Endothelial cell of umbilical vein (primary cell): ENCODE measurements at regions of chr6 and their contacts with region 1.

Region 1: GRCh38 chr6:2818593-2818992 is 23.1 kb downstream of the SERPINB1 start:
- DNase-seq: peak; percentile 88
- H3K4me3 ChIP-seq: peak overlapping the region in 1 of 3 experiments; percentile 28
- H3K27ac ChIP-seq: peak overlapping the region; percentile 92
- H3K4me1 ChIP-seq: peaks cover 44% of the 10 kb centered on the region
- H3K27me3 ChIP-seq: no peaks in the 10 kb centered on the region
- CTCF ChIP-seq: no peak
- POLR2A ChIP-seq: no peak

Region 2: DNA sequence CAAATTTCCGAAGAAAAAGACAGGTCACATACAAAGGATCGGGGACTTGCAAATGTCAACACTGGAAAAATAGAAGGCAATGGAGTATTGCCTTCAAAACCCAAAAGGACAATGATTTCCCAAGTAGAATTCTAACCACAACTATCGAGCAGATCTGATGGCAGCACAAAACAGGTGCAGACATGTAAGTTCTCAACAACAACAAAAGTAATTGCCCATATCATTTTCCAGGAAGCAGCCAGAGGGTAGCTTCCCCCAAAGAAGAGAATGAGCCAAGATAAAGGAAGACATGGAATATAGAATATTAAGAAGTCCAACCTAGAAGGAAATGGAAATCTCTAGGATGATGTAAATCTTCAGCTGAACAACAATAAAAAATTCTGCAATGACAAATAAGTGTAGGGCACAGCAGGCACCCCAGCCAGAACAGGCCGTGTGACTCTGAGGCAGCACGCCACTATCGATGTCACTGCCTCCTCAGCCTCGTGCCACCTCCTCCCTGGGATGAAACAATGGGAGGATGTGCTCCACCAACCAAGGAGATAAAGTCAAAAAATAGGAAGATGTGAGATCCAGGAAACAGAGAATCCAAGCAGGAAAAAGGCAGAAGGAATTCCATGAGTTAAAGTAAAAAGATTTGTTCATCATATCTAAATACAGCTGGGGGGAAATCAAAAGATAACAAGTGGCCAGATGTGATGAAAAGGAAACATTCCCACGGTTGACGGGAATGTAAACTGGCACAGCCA is 11.1 kb before region 1 on chr6:
- CTCF ChIA-PET with region 1: interaction called, 11 read pairs
- POLR2A ChIA-PET with region 1: no interaction called
- dilution Hi-C with region 1: no loop called
- intact Hi-C with region 1: loop called (anchors 1 kb)
- DNase-seq: peak; percentile 80
- H3K4me3 ChIP-seq: no peak overlapping the region
- H3K27ac ChIP-seq: peak overlapping the region; percentile 7
- H3K4me1 ChIP-seq: peaks cover 30% of the 10 kb centered on the region
- H3K27me3 ChIP-seq: no peaks in the 10 kb centered on the region
- CTCF ChIP-seq: no peak
- POLR2A ChIP-seq: no peak

Region 3: DNA sequence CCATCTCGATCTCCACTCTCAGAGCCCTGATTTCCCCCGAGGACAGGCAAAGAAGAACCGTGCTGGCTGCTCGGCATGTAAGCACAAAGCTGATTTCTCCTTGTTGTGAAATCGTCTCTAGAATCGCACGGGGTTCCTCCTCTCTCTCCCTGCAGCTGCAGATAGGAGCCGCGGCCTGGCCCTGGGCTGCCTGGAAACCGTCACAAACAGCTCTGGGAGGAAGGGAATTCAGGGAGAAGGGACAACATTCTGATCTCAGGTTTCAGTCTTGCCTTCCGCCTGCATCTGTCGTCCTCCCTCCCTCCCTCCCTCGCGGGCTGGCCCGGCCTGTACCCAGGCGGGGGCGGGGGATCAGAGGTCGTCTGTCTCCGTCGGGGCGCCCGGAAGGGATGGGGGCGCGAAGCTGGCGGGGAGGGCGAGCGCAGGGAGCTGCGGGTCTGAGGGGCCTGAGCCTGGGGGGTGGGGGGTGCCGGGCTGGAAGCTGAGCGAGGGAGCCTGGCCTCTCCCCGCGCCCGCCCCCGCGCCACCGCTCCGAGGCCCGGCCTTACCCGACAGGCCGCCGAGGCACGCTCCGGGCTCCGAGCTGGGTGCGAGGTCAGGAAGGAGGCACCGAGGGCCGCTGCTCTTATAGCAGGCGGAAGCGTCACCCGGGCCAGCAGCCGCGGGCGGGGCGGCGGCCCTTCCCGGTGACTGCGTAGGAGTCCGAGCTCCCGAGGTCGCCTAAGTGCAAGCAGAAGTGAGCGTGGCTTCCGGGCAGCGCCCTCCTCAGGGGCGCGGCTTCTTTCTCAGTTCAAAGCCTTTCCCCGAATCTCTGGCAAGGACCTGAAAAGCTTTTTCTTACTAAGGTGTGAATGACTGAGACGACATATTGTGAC is 22.9 kb after region 1 on chr6 and contains the start of gene SERPINB1:
- CTCF ChIA-PET with region 1: interaction called, 10 read pairs
- POLR2A ChIA-PET with region 1: interaction called, 3 read pairs
- dilution Hi-C with region 1: no loop called
- intact Hi-C with region 1: loop called (anchors 1 kb)
- DNase-seq: peak; percentile 88
- H3K4me3 ChIP-seq: peak within 1 kb of the TSS; percentile 33 to 44 (median 38)
- H3K27ac ChIP-seq: peak within 1 kb of the TSS; percentile 62
- H3K4me1 ChIP-seq: peaks cover 37% of the 10 kb centered on the region
- H3K27me3 ChIP-seq: no peaks in the 10 kb centered on the region
- CTCF ChIP-seq: no peak
- POLR2A ChIP-seq: no peak
- total RNA-seq, gene SERPINB1: 23.3 and 24.0 TPM in 2 replicates